ENCODE measurements at regions of chr6 and their contacts with region 1.

Region 1: DNA sequence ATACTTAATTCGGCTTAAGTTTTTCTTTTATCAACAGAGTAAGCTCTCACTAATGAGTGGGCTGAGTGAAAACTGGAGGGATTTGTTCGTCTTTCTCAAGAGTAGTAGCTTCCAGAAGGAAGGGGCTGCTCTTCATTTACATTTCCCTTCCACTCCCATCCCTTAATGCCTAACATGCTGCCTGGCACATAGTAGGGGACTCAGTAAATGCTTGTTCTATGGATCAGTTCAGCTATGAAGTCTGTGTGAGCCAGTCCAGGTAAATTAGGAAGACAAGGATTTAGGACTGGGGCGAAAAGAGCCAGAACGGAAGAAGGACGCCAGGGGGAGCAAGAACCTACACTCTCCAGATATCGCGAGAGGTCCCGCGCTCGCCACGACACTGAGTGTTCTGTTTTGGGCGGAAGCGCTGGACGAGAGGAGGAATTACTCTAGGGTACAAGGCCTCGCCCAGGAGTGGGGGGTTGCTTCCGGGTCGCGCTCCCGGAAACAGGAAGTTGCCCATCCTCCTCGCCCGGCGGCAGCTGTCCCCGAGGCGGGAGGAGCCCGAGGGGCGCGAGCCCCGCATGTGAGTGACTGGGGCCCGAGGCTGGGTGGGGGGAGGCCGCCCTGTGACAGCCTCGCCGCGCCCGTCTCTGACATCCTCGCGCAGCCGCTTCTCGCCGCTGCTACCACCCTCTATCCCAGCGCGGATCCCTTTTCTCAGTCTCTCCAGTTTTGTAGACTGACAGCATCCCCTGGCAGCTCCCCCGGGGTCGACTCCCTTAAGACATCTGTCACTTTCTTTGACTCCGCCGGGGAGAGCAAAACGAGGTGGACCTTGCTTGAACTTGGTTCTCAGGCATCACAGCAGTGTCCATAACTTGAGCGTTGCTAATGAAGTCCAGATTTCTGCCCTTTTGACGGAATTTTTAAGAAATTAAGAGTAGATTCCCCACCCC is at the start of gene C6orf89:
- DNase-seq: peak; percentile 95 to 98 (median 98)
- ATAC-seq: peak; percentile 99
- H3K4me3 ChIP-seq: peak within 1 kb of the TSS; percentile 84 to 92
- H3K27ac ChIP-seq: peak within 1 kb of the TSS; percentile 78 to 88
- H3K4me1 ChIP-seq: peaks cover 0 to 24% of the 10 kb centered on the region in 2 donors
- H3K27me3 ChIP-seq: no peaks in the 10 kb centered on the region
- CTCF ChIP-seq: peak; percentile 81 to 89
- polyA plus RNA-seq, gene C6orf89: 43.8 to 50.4 (median 46.5) TPM

Region 2: DNA sequence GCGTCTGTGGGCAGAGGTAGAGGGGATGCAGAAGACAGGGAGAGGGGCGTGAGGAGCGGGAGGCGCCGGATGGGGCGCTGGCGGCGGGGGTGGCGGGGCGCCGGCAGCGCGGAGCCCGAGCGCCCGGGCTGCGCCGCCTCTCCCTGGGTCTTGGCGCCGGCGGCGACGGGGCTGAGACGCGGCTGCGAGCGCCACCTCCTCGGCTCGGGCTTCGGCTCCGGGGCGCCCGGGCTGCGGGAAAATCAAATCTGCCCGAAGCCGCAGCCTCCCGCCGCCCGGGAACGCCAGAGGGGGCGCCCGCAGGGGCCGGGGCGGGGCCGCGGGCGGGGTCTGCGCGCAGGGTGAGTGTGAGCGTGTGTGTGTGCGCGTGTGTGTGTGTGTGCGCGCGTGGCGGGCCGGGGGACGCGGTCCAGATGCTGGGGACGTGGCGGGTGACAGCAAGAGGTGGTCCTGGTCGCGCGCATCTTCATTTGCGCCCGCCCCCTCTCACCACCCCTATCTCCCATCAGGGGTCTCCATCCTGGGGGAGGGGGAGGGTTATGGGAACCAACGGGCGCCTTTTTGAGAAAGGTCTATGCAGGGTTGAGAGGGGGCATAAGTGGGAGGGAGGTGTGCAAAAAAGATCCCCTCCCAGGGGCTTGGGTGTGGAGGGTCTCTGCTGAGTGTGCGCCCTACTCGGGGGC is 45.8 kb before region 1 on chr6:
- intact Hi-C with region 1: no loop called
- DNase-seq: peak in 2 of 4 donors; percentile 47 to 83
- ATAC-seq: peak; percentile 75
- H3K4me3 ChIP-seq: peak overlapping the region; percentile 29 to 36
- H3K27ac ChIP-seq: no peak overlapping the region
- H3K4me1 ChIP-seq: peaks cover 16 to 22% of the 10 kb centered on the region in 2 donors
- H3K27me3 ChIP-seq: peaks cover 17 to 45% of the 10 kb centered on the region in 2 donors
- CTCF ChIP-seq: no peak

Region 3: GRCh38 chr6:36985808-36986703 is 100.3 kb after region 1 on chr6 and contains the start of gene MTCH1:
- intact Hi-C with region 1: loop called in 1 of 2 experiments (anchors 10 kb)
- DNase-seq: peak; percentile 92 to 96 (median 94)
- ATAC-seq: peak; percentile 95
- H3K4me3 ChIP-seq: peak within 1 kb of the TSS; percentile 98 to 99
- H3K27ac ChIP-seq: peak within 1 kb of the TSS; percentile 95 to 98
- H3K4me1 ChIP-seq: peaks cover 16 to 50% of the 10 kb centered on the region in 2 donors
- H3K27me3 ChIP-seq: no peaks in the 10 kb centered on the region
- CTCF ChIP-seq: no peak
- polyA plus RNA-seq, gene MTCH1: 145 to 187 (median 157) TPM

Measured in left lung (tissue), 14 donors.